Ascending aorta (tissue), 2 donors: ENCODE measurements at regions of chr9 and their contacts with region 1.

Region 1: GRCh38 chr9:115117999-115118878 is at the start of gene TNC:
- DNase-seq: peak; percentile 12 to 86
- H3K4me3 ChIP-seq: peak within 1 kb of the TSS; percentile 49 to 62
- H3K27ac ChIP-seq: peak within 1 kb of the TSS; percentile 66 to 74
- H3K4me1 ChIP-seq: peaks cover 0 to 11% of the 10 kb centered on the region in 2 donors
- H3K27me3 ChIP-seq: no peaks in the 10 kb centered on the region
- CTCF ChIP-seq: no peak
- total RNA-seq, gene TNC: 137 TPM

Region 2: DNA sequence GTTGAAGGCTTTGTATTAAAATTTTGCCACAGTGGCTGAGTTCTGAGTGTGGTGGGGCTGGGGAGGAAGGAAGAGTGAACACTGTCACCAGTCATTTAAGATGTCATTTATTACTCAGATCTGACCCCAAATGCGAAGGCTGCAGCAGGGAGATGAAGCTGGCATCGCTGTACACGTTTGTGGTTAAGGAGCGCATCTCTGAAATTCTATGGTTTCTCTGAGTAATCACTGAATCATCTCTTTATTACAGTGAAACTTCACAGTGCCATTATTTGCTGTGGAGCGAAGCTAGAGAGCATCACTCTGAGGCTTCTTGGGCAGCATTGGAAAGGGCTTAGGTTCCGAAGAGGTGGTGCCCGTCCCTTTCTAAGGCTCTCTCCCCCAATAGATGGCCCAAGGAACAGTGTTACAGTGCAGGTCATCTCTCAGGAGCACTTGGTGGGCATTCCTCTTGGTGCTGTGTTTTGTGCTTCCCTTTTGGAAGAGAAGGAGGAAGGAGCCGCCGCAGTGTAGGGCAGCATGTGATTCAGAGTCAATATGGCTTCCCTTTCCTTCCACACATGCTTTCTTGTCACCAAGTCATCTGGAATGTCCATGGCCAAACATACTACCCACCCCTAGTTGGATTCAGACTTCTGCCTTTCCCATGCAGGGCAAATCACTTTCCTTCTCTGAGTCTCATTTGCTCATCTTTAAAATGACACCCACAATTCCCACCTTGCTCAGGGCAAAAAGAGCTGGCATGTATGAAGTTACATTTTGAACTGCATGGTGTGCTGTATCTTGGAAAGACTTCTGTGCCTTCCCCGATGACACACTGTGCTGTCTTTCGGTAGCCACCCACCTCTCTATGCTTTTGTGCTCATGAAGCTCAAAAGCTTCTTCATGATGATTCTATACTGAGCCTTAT is 426.9 kb before region 1 on chr9:
- intact Hi-C with region 1: no loop called
- DNase-seq: no peak
- H3K4me3 ChIP-seq: no peak overlapping the region
- H3K27ac ChIP-seq: no peak overlapping the region
- H3K4me1 ChIP-seq: no peaks in the 10 kb centered on the region
- H3K27me3 ChIP-seq: no peaks in the 10 kb centered on the region
- CTCF ChIP-seq: no peak

Region 3: GRCh38 chr9:115042781-115043509 is 75.3 kb before region 1 on chr9:
- intact Hi-C with region 1: loop called (anchors 5 kb)
- DNase-seq: peak; percentile 26 to 82
- H3K4me3 ChIP-seq: no peak overlapping the region
- H3K27ac ChIP-seq: peak overlapping the region; percentile 70 to 71
- H3K4me1 ChIP-seq: peaks cover 10 to 37% of the 10 kb centered on the region in 2 donors
- H3K27me3 ChIP-seq: no peaks in the 10 kb centered on the region
- CTCF ChIP-seq: no peak

Region 4: GRCh38 chr9:115063058-115063845 is 55.0 kb before region 1 on chr9:
- intact Hi-C with region 1: loop called (anchors 5 kb)
- DNase-seq: no peak
- H3K4me3 ChIP-seq: no peak overlapping the region
- H3K27ac ChIP-seq: peak overlapping the region; percentile 50 to 68
- H3K4me1 ChIP-seq: peaks cover 14 to 28% of the 10 kb centered on the region in 2 donors
- H3K27me3 ChIP-seq: no peaks in the 10 kb centered on the region
- CTCF ChIP-seq: no peak

Region 5: GRCh38 chr9:115204904-115205453 is 86.7 kb after region 1 on chr9:
- intact Hi-C with region 1: no loop called
- DNase-seq: no peak
- H3K4me3 ChIP-seq: no peak overlapping the region
- H3K27ac ChIP-seq: no peak overlapping the region
- H3K4me1 ChIP-seq: no peaks in the 10 kb centered on the region
- H3K27me3 ChIP-seq: no peaks in the 10 kb centered on the region
- CTCF ChIP-seq: no peak